Cardiac septum (tissue), 1 donor: ENCODE measurements at regions of chr17 and their contacts with region 1.

Region 1: GRCh38 chr17:12256380-12256995 is 235.8 kb downstream of the MAP2K4 start:
- DNase-seq: no peak

Region 2: DNA sequence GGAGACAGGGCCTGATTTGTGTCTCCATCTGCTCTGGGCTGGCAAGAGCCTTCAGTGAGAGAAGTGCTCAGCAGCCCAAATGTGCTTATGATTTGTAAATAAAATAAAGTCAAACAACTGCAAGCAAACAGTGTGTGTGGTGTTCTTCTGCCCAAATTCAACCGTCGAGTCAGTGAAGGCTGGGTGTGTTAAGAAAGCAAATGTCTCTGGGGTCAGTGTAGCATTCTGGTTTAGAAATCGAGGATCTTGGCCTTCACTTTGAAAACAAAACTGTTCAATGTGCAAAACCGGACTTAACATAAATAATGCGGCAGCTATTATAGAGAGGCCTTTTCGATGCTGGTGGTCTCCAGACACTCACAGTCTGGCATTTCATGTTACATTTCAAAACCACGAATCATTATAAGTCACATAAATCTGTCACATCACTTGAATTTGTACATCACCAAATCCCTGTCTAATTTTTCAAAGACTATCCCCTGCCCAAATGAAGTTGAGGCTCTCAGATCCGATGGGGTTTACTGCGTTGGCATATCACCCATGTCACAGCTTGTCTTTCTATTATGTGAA is 250.6 kb after region 1 on chr17:
- intact Hi-C with region 1: no loop called
- DNase-seq: no peak

Region 3: DNA sequence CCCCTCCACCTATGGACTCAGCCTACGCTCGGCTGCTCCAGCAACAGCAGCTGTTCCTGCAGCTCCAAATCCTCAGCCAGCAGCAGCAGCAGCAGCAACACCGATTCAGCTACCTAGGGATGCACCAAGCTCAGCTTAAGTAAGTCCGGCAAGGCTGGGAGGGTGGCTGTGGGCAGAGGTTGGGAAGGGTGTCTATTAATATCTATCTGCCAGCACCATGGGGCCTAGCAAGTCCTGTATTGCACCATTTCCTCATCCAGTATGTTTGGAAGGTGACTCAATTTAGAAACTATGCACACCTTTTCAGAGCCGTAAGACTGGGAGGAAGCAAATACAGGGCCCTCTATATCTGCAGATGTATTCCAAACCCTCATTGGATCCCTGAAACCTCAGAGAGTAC is 487.8 kb after region 1 on chr17:
- intact Hi-C with region 1: loop called (anchors 5 kb)
- DNase-seq: peak; percentile 84

Region 4: DNA sequence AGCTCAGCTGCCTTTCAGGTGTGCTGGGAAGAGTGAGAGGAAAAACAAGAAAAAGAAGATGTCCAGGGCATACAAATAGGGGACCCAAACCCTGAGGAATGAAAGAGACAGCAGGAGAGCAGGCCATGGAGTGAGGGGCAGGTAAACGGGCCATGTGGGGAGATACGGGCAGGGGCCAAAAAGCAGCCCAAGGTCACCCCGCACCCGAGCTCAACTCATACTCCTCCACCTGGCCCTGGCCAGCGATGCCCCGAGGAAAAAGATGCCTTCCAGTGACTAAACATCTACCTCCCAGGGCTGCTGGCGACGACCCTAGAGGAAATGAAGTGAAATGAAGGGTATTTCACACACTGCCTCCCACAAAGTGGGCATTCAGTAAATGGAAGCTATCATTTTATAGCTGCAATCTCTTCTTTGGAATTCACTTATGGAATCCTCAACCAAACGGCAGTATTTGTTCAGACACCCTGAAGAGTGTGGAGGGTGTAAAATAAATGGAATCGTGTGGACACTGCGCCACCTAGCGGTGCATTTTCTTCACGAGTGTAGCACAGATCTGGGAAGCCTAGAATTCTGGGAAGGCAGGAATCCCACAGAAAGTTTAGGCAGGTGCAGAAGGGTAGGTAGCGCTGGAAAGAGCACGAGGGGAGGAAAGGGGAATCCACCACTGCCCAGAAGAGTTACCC is 746.4 kb after region 1 on chr17:
- intact Hi-C with region 1: loop called (anchors 5 kb)
- DNase-seq: peak; percentile 84